ENCODE measurements at regions of chr5 and their contacts with region 1.

Region 1: DNA sequence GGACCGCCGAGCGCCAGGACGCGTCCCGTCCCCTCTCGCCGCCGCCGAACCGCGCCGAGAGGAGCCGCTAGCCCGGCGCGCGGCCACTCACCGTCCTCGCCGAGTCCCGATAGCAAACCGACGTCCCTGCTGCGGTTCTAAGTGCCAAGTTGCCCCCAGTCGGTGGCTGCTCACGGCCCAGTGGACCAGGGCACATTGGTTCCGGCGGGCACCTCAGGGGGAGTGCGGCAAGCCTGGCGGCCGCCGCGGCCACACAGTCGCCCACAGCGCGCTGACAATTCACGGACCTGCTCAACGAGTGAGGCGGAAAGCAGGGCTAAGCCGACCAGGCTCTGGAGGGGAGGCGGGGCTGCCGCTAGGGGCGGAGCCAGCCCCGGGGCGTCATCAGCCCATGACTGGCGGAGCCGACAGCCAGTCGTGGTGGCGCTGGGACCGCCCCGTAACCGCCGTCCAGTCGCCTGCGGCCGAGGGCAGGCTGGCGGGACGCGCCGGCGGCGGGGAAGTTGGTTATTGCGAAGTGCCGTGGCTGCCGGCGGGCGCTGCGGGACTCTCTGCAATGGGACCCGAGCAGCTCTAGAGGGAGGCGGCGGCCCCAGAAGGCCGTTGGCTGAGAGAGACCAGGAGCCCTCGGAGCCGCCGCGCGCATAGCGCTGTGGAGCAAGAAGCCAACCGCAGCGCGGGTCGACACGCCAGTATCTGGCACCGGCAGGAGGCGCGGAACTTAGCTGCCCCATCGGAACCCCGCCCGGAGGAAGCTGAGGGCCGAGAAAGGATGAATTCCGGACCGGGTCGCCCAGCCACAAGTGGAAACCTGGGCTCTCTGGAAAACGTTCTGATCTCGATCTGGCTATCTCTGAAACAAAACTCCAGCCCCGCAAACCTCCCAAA is at the start of gene MARCHF3:
- DNase-seq: peak; percentile 80 to 98 (median 92)
- ATAC-seq: peak; percentile 94
- H3K4me3 ChIP-seq: peak within 1 kb of the TSS; percentile 93
- H3K4me3 Mint-ChIP-seq: peak within 1 kb of the TSS; percentile 97
- H3K27ac ChIP-seq: peak within 1 kb of the TSS; percentile 9 to 63
- H3K27ac Mint-ChIP-seq: peak within 1 kb of the TSS; percentile 77
- H3K4me1 ChIP-seq: peaks cover 24% of the 10 kb centered on the region
- H3K4me1 Mint-ChIP-seq: peaks cover 21% of the 10 kb centered on the region
- H3K27me3 ChIP-seq: no peaks in the 10 kb centered on the region
- H3K27me3 Mint-ChIP-seq: peaks cover 12% of the 10 kb centered on the region
- CTCF ChIP-seq: peak; percentile 23
- total RNA-seq, gene MARCHF3: 5.2 to 6.2 TPM

Region 2: GRCh38 chr5:126015235-126016181 is 1015.0 kb before region 1 on chr5:
- CTCF ChIA-PET with region 1: no interaction called
- POLR2A ChIA-PET with region 1: no interaction called
- intact Hi-C with region 1: no loop called
- DNase-seq: no peak
- ATAC-seq: no peak
- H3K4me3 ChIP-seq: no peak overlapping the region
- H3K4me3 Mint-ChIP-seq: no peak overlapping the region
- H3K27ac ChIP-seq: no peak overlapping the region
- H3K27ac Mint-ChIP-seq: no peak overlapping the region
- H3K4me1 ChIP-seq: no peaks in the 10 kb centered on the region
- H3K4me1 Mint-ChIP-seq: no peaks in the 10 kb centered on the region
- H3K27me3 ChIP-seq: no peaks in the 10 kb centered on the region
- H3K27me3 Mint-ChIP-seq: no peaks in the 10 kb centered on the region
- CTCF ChIP-seq: no peak

Region 3: GRCh38 chr5:126594676-126595485 is 435.6 kb before region 1 on chr5 and contains the start of gene ALDH7A1:
- CTCF ChIA-PET with region 1: no interaction called
- POLR2A ChIA-PET with region 1: no interaction called
- intact Hi-C with region 1: loop called in 1 of 2 experiments (anchors 5 kb)
- DNase-seq: peak in 11 of 14 experiments; percentile 2 to 68 (median 30)
- ATAC-seq: peak; percentile 70
- H3K4me3 ChIP-seq: peak within 1 kb of the TSS; percentile 69
- H3K4me3 Mint-ChIP-seq: peak within 1 kb of the TSS; percentile 91
- H3K27ac ChIP-seq: no peak within 1 kb of the TSS
- H3K27ac Mint-ChIP-seq: peak within 1 kb of the TSS; percentile 9
- H3K4me1 ChIP-seq: peaks cover 16% of the 10 kb centered on the region
- H3K4me1 Mint-ChIP-seq: peaks cover 18% of the 10 kb centered on the region
- H3K27me3 ChIP-seq: peaks cover 4 to 5% of the 10 kb centered on the region in 2 experiments
- H3K27me3 Mint-ChIP-seq: no peaks in the 10 kb centered on the region
- CTCF ChIP-seq: no peak
- total RNA-seq, gene ALDH7A1: 1.6 to 2.1 TPM

Region 4: GRCh38 chr5:126852091-126852571 is 178.4 kb before region 1 on chr5:
- CTCF ChIA-PET with region 1: no interaction called
- POLR2A ChIA-PET with region 1: interaction called, 12 read pairs
- intact Hi-C with region 1: loop called in 1 of 2 experiments (anchors 5 kb)
- DNase-seq: peak in 8 of 14 experiments; percentile 6 to 64 (median 44)
- ATAC-seq: peak; percentile 81
- H3K4me3 ChIP-seq: peak overlapping the region; percentile 1
- H3K4me3 Mint-ChIP-seq: peak overlapping the region; percentile 93
- H3K27ac ChIP-seq: peak overlapping the region; percentile 64 to 78
- H3K27ac Mint-ChIP-seq: peak overlapping the region; percentile 100
- H3K4me1 ChIP-seq: peaks cover 42% of the 10 kb centered on the region
- H3K4me1 Mint-ChIP-seq: peaks cover 64% of the 10 kb centered on the region
- H3K27me3 ChIP-seq: no peaks in the 10 kb centered on the region
- H3K27me3 Mint-ChIP-seq: no peaks in the 10 kb centered on the region
- CTCF ChIP-seq: no peak

Region 5: GRCh38 chr5:126988021-126988569 is 42.4 kb before region 1 on chr5:
- CTCF ChIA-PET with region 1: no interaction called
- POLR2A ChIA-PET with region 1: interaction called, 3 read pairs
- intact Hi-C with region 1: loop called in 1 of 2 experiments (anchors 5 kb)
- DNase-seq: peak in 7 of 14 experiments; percentile 5 to 74 (median 39)
- ATAC-seq: peak; percentile 88
- H3K4me3 ChIP-seq: no peak overlapping the region
- H3K4me3 Mint-ChIP-seq: peak overlapping the region; percentile 77
- H3K27ac ChIP-seq: peak overlapping the region; percentile 38 to 54
- H3K27ac Mint-ChIP-seq: peak overlapping the region; percentile 85
- H3K4me1 ChIP-seq: peaks cover 16% of the 10 kb centered on the region
- H3K4me1 Mint-ChIP-seq: peaks cover 36% of the 10 kb centered on the region
- H3K27me3 ChIP-seq: no peaks in the 10 kb centered on the region
- H3K27me3 Mint-ChIP-seq: no peaks in the 10 kb centered on the region
- CTCF ChIP-seq: no peak

Region 6: DNA sequence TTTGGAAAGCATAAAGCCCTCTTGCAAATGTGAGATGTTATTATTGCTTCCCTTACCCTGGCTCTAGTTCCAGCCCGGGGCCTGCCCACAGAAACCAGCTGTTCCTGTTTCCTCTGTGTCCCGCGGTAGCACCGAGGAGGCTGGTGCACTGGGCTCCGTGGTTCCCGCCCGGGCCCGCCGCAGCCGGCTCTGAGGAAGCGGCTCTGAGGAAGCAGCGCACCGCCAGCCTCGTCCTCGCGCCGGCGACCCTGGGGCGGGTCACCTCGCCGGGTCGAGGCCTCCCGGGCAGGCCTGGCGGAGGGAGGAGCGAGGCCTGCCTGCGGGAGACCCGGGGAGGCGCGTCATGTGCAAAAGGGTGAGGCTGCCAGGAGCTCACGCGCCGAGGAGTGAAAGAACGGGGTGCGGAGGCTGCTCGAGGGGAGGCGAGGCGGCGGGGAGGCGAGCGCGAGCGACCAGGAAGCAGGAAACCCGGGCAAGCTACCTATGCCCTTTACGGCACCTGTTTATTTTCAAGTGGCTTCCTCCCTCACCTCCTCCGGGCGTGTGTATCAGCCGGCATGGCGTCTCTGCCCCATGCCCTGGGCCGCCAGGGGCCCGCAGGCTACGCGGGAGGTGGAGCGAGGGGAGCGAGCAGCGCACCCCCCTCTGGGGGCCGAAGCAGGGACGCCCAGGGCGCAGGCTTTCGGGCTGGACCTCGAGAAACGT is 198.8 kb after region 1 on chr5:
- CTCF ChIA-PET with region 1: no interaction called
- POLR2A ChIA-PET with region 1: interaction called, 9 read pairs
- intact Hi-C with region 1: loop called in 1 of 2 experiments (anchors 5 kb)
- DNase-seq: peak; percentile 25 to 72 (median 50)
- ATAC-seq: peak; percentile 84
- H3K4me3 ChIP-seq: peak overlapping the region; percentile 63
- H3K4me3 Mint-ChIP-seq: peak overlapping the region; percentile 87
- H3K27ac ChIP-seq: peak overlapping the region; percentile 62 to 63
- H3K27ac Mint-ChIP-seq: peak overlapping the region; percentile 55
- H3K4me1 ChIP-seq: peaks cover 16% of the 10 kb centered on the region
- H3K4me1 Mint-ChIP-seq: peaks cover 23% of the 10 kb centered on the region
- H3K27me3 ChIP-seq: no peaks in the 10 kb centered on the region
- H3K27me3 Mint-ChIP-seq: no peaks in the 10 kb centered on the region
- CTCF ChIP-seq: no peak